ENCODE measurements at regions of chr21 and their contacts with region 1.

Region 1: GRCh38 chr21:17925000-17925610 is 105.9 kb upstream of the C21orf91 start:
- DNase-seq: peak; percentile 66
- ATAC-seq: peak; percentile 99
- H3K4me3 Mint-ChIP-seq: no peak overlapping the region
- H3K27ac Mint-ChIP-seq: no peak overlapping the region
- H3K4me1 Mint-ChIP-seq: no peaks in the 10 kb centered on the region
- H3K27me3 Mint-ChIP-seq: peaks cover 2% of the 10 kb centered on the region
- CTCF ChIP-seq: peak; percentile 86

Region 2: DNA sequence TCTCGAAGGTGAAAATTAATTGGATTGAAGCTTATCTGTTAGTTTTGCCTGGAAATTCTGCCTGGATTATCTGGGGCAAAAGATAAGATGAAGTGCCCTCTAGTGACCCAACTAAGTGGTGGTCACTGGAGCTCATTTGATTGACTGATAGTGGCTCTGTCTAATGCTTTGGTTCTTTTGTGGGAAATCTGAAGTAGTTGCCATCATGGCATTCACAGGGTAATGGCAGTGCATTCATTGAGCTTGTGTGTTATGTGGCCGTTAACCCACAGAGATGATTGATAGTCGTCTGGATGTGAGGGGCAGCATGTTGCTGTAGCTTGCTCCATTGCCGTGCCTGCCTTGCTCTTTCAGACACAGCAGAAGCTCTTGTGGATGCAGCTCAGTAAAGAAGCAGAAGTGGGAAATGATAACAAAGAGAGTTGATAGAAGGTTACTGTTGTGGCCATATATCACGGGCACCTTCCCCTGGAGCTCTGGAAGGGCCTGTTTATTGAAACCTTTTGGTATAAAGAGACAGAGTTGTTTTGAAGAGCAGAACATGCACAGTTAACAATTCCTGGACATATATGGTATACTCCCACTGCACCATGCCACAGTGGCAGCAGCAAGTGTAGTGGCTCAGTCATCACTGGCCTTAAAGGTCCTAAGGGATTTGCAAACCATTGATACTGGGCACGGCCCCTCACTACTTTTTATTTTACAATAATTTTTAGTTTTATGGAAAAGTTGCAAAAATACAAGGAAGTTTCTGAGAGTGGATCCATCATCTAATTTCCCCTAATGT is 370.2 kb before region 1 on chr21:
- CTCF ChIA-PET with region 1: no interaction called
- POLR2A ChIA-PET with region 1: no interaction called
- intact Hi-C with region 1: no loop called
- DNase-seq: no peak
- ATAC-seq: no peak
- H3K4me3 Mint-ChIP-seq: no peak overlapping the region
- H3K27ac Mint-ChIP-seq: no peak overlapping the region
- H3K4me1 Mint-ChIP-seq: no peaks in the 10 kb centered on the region
- H3K27me3 Mint-ChIP-seq: no peaks in the 10 kb centered on the region
- CTCF ChIP-seq: no peak

Region 3: DNA sequence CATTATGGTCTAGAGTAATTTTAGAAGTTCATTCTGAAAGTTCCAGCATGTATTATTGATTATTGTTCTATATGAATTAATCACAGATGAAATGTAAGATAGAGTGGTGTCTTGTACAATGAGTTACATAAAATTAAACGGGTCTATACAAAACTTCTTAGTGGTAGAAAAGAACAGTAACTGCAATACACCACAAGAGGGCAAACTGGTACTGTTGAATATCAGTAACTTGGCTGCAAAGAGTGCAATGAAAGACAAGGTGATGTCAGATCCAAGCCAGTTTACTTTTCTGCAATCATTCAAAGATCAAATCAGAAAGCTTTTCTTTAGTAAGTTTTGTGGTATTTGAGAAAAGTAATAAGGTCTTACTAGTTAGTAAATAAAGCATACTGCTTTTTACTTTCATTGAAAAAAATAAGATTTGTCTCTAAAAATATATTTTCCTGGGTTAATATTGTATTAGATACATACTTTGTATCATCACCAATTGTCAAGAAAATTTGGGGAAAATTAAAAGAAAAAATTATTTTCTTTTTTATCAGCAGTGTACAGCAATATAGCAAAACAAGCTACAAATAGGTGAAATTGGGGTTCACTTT is 246.0 kb before region 1 on chr21:
- CTCF ChIA-PET with region 1: interaction called, 55 read pairs
- POLR2A ChIA-PET with region 1: no interaction called
- intact Hi-C with region 1: loop called (anchors 2 kb)
- DNase-seq: peak; percentile 15
- ATAC-seq: peak; percentile 87
- H3K4me3 Mint-ChIP-seq: no peak overlapping the region
- H3K27ac Mint-ChIP-seq: no peak overlapping the region
- H3K4me1 Mint-ChIP-seq: peaks cover 13% of the 10 kb centered on the region
- H3K27me3 Mint-ChIP-seq: no peaks in the 10 kb centered on the region
- CTCF ChIP-seq: peak; percentile 71

Region 4: DNA sequence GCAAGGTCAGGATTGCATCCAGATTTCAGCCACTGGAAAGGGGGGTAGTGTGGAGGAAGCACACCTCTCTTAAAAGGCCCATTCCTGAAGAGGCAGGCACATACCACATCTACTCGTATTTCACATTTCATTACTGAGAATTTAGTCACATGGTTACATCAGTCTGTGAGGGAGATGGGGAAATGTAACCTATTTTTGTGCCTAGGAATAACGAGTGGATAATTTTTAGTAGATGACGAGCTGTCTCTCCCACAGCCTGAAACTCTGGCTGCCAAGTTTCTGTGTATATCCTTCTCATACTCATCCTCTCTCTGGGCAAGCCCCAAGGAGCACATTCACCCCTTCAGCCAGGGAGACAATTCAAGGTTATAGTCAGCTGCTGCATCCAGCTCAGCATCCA is 95.6 kb before region 1 on chr21:
- CTCF ChIA-PET with region 1: no interaction called
- POLR2A ChIA-PET with region 1: no interaction called
- intact Hi-C with region 1: no loop called
- DNase-seq: no peak
- ATAC-seq: no peak
- H3K4me3 Mint-ChIP-seq: no peak overlapping the region
- H3K27ac Mint-ChIP-seq: no peak overlapping the region
- H3K4me1 Mint-ChIP-seq: no peaks in the 10 kb centered on the region
- H3K27me3 Mint-ChIP-seq: no peaks in the 10 kb centered on the region
- CTCF ChIP-seq: no peak

Region 5: GRCh38 chr21:17903029-17903806 is 21.9 kb before region 1 on chr21:
- CTCF ChIA-PET with region 1: interaction called, 15 read pairs
- POLR2A ChIA-PET with region 1: interaction called, 3 read pairs
- intact Hi-C with region 1: no loop called
- DNase-seq: no peak
- ATAC-seq: peak; percentile 55
- H3K4me3 Mint-ChIP-seq: no peak overlapping the region
- H3K27ac Mint-ChIP-seq: no peak overlapping the region
- H3K4me1 Mint-ChIP-seq: peaks cover 9% of the 10 kb centered on the region
- H3K27me3 Mint-ChIP-seq: no peaks in the 10 kb centered on the region
- CTCF ChIP-seq: peak; percentile 62

Region 6: GRCh38 chr21:17911628-17912027 is 13.5 kb before region 1 on chr21:
- CTCF ChIA-PET with region 1: interaction called, 17 read pairs
- POLR2A ChIA-PET with region 1: no interaction called
- intact Hi-C with region 1: no loop called
- DNase-seq: no peak
- ATAC-seq: no peak
- H3K4me3 Mint-ChIP-seq: no peak overlapping the region
- H3K27ac Mint-ChIP-seq: no peak overlapping the region
- H3K4me1 Mint-ChIP-seq: no peaks in the 10 kb centered on the region
- H3K27me3 Mint-ChIP-seq: peaks cover 3% of the 10 kb centered on the region
- CTCF ChIP-seq: no peak

Region 7: DNA sequence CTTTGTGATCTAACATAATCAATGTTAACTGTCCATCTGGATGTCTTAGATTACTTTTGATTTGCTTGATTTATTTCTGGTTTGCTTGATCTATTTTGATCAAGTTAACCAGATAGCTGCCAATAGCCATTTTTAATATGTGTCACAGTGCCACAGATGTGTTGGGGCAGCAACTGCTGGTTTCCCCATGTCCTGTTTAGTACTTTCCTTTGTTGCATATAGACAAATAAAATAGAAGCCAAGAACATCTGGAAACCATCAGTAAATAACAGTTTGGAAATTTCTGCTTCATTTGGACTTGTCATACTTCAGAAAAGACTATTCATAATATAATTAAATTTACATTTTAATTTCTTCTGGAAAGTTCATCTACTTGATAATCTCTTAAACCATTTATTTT is 39.6 kb after region 1 on chr21:
- CTCF ChIA-PET with region 1: interaction called, 14 read pairs
- POLR2A ChIA-PET with region 1: no interaction called
- intact Hi-C with region 1: no loop called
- DNase-seq: no peak
- ATAC-seq: no peak
- H3K4me3 Mint-ChIP-seq: no peak overlapping the region
- H3K27ac Mint-ChIP-seq: no peak overlapping the region
- H3K4me1 Mint-ChIP-seq: no peaks in the 10 kb centered on the region
- H3K27me3 Mint-ChIP-seq: peaks cover 1% of the 10 kb centered on the region
- CTCF ChIP-seq: no peak

Region 8: GRCh38 chr21:17976139-17976538 is 51.0 kb after region 1 on chr21:
- CTCF ChIA-PET with region 1: no interaction called
- POLR2A ChIA-PET with region 1: no interaction called
- intact Hi-C with region 1: no loop called
- DNase-seq: no peak
- ATAC-seq: no peak
- H3K4me3 Mint-ChIP-seq: no peak overlapping the region
- H3K27ac Mint-ChIP-seq: no peak overlapping the region
- H3K4me1 Mint-ChIP-seq: no peaks in the 10 kb centered on the region
- H3K27me3 Mint-ChIP-seq: peaks cover 3% of the 10 kb centered on the region
- CTCF ChIP-seq: no peak

Region 9: DNA sequence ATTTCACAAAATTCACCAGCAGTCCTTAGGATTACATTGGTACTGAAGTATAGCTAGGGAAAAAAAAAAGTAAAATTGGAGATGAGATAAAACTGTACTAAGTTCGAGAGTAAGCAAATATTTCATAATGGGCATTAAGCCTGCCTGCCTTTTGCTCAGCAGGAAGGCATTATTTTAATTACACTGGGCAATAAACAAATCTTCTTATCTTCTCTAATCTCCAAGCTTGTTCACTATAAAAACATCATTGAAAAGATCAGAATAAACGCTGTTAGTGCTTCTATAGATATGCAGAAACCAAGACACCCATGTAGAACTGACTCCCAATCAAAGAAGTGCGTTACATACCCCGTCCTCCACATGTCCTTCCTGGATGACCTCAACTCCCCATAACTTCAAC is 145.3 kb after region 1 on chr21:
- CTCF ChIA-PET with region 1: no interaction called
- POLR2A ChIA-PET with region 1: no interaction called
- intact Hi-C with region 1: no loop called
- DNase-seq: no peak
- ATAC-seq: no peak
- H3K4me3 Mint-ChIP-seq: no peak overlapping the region
- H3K27ac Mint-ChIP-seq: no peak overlapping the region
- H3K4me1 Mint-ChIP-seq: no peaks in the 10 kb centered on the region
- H3K27me3 Mint-ChIP-seq: no peaks in the 10 kb centered on the region
- CTCF ChIP-seq: no peak

Measured in activated CD8-positive, alpha-beta T cell treated with anti-CD3 and anti-CD28 coated beads for 36 hours (primary cell).